Psoas muscle (tissue), 8 donors: ENCODE measurements at regions of chrX and their contacts with region 1.

Region 1: DNA sequence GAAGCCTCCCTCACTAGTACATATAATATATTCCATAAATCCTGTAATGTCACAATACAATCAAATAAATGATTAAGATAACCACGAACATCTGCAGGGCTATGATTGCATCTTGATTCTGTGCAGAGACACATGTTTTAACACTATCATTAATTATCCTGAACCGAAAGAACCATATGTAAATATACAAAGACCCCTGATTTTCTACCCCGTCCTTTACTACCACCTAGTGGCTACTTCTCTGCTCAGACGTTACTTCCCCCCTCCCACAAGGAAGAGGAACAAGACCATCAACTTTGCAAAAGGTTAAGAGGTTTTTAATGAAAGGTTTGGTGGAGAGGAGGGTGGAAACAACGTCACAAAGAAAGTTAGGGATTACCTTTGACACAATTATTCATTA is 134.0 kb downstream of the COL4A6 start:
- DNase-seq: no peak
- ATAC-seq: no peak
- H3K4me3 ChIP-seq: no peak overlapping the region
- H3K27ac ChIP-seq: no peak overlapping the region
- H3K4me1 ChIP-seq: no peaks in the 10 kb centered on the region
- H3K27me3 ChIP-seq: peaks cover 0 to 23% (median 0%) of the 10 kb centered on the region in 3 donors
- CTCF ChIP-seq: peak; percentile 28

Region 2: GRCh38 chrX:108224727-108225621 is 79.2 kb before region 1 on chrX:
- intact Hi-C with region 1: loop called in 1 of 2 experiments (anchors 5 kb)
- DNase-seq: peak in 1 of 2 donors; percentile 31
- ATAC-seq: peak in 1 of 4 donors; percentile 70
- H3K4me3 ChIP-seq: no peak overlapping the region
- H3K27ac ChIP-seq: no peak overlapping the region
- H3K4me1 ChIP-seq: no peaks in the 10 kb centered on the region
- H3K27me3 ChIP-seq: peaks cover 0 to 21% (median 0%) of the 10 kb centered on the region in 3 donors
- CTCF ChIP-seq: peak; percentile 52

Region 3: DNA sequence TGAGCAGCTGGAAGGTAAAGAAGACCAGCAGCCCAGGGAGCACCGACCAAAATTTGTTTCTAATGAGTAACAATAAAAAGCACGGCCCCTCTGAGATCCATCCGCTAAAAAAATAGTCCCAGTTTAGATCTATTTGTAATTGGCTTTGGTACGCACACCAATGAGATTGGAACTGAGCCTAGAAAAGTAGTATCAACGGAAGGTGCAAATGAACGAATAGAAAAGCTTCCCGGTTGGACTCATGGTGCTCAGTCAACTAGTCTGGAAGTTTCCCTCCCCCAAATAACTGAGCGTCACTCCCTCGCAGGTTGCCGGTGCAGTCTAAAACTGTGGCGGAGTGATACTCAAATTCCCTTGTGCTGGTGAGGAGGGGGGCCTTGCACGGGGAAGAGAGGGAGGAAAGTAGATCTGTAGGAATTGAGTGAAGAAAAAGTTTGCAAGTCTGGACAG is 135.2 kb after region 1 on chrX and contains the start of gene COL4A5:
- intact Hi-C with region 1: loop called in 1 of 2 experiments (anchors 10 kb)
- DNase-seq: peak; percentile 31 to 61
- ATAC-seq: peak; percentile 88 to 94 (median 92)
- H3K4me3 ChIP-seq: peak within 1 kb of the TSS; percentile 70
- H3K27ac ChIP-seq: peak within 1 kb of the TSS; percentile 75
- H3K4me1 ChIP-seq: no peaks in the 10 kb centered on the region
- H3K27me3 ChIP-seq: peaks cover 0 to 44% (median 0%) of the 10 kb centered on the region in 3 donors
- CTCF ChIP-seq: no peak
- total RNA-seq, gene COL4A5: 3.1 to 8.6 (median 6.1) TPM

Region 4: DNA sequence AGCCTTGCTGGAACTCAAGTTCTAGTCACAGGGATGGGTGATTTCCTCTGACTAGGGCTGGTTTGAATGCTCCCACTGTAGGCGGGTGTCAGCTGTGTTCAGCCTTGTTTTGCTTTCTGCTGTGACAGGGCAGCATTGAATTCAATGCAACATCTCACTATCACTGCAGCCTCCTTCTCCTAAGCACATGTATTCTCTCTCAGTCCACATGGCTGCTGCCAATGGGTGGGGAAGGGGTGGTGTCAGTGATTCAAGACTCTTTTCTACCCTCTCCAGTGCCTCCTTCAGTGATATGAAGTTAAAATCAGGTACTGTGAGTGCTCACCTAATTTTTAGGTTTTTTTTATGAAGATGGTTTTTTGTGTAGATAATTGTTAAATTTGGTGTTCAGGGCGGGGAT is 181.8 kb after region 1 on chrX:
- intact Hi-C with region 1: no loop called
- DNase-seq: no peak
- ATAC-seq: no peak
- H3K4me3 ChIP-seq: no peak overlapping the region
- H3K27ac ChIP-seq: no peak overlapping the region
- H3K4me1 ChIP-seq: no peaks in the 10 kb centered on the region
- H3K27me3 ChIP-seq: no peaks in the 10 kb centered on the region
- CTCF ChIP-seq: no peak

Region 5: GRCh38 chrX:108537005-108537404 is 232.8 kb after region 1 on chrX:
- intact Hi-C with region 1: loop called (anchors 5 to 10 kb)
- DNase-seq: no peak
- ATAC-seq: peak; percentile 57 to 80 (median 71)
- H3K4me3 ChIP-seq: no peak overlapping the region
- H3K27ac ChIP-seq: no peak overlapping the region
- H3K4me1 ChIP-seq: no peaks in the 10 kb centered on the region
- H3K27me3 ChIP-seq: no peaks in the 10 kb centered on the region
- CTCF ChIP-seq: peak; percentile 68